ENCODE measurements at regions of chr3 and their contacts with region 1.

Region 1: GRCh38 chr3:174862143-174862542 is 3.0 kb downstream of the NAALADL2 start:
- DNase-seq: peak; percentile 68 to 82
- H3K4me3 ChIP-seq: no peak overlapping the region
- H3K27ac ChIP-seq: no peak overlapping the region
- H3K4me1 ChIP-seq: peaks cover 60% of the 10 kb centered on the region
- H3K27me3 ChIP-seq: no peaks in the 10 kb centered on the region
- CTCF ChIP-seq: peak; percentile 61

Region 2: DNA sequence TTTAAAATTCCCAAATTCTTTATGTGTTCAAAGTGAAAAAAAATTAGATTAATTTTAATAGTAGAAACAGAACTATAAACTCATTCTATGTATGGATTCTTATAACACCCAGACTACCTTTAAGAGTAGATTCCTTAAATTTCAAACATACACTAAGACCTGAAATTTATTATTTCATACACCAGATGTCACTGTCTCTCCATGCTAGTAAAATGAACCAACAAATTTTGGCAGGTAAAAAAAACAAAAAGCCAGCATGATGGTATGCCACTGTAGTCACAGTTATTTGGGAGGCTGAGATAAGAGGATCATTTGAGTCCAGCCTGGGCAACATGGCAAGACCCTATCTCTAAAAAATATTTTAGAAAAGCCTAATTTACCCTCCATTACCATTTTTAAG is 464.3 kb before region 1 on chr3:
- CTCF ChIA-PET with region 1: no interaction called
- POLR2A ChIA-PET with region 1: no interaction called
- intact Hi-C with region 1: loop called (anchors 2 kb)
- DNase-seq: peak in 1 of 2 experiments; percentile 51
- H3K4me3 ChIP-seq: no peak overlapping the region
- H3K27ac ChIP-seq: no peak overlapping the region
- H3K4me1 ChIP-seq: no peaks in the 10 kb centered on the region
- H3K27me3 ChIP-seq: no peaks in the 10 kb centered on the region
- CTCF ChIP-seq: peak; percentile 79

Region 3: DNA sequence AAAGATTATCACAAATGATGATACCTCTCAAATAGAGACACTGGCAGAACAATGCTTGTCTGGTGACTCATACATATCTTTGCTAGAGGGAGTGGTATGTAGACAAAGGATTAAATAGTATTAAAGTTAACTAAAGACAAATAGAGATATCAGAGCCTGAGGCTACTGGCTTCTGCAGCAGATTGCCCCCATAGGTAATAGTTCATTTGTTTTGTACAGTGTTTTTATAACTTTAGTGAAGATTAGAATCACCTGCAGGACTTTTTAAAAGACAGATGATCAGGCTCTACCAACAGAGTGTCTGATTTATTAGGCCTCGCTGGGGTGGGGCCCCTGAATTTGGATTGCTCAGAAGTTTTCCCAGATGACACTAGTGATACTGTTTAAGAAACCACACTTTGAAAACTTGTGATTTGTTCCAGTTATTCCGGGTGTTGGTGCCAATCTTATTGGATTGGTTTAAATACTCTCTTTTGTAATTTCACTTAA is 93.4 kb after region 1 on chr3:
- CTCF ChIA-PET with region 1: no interaction called
- POLR2A ChIA-PET with region 1: no interaction called
- intact Hi-C with region 1: loop called (anchors 1 kb)
- DNase-seq: peak; percentile 58 to 90
- H3K4me3 ChIP-seq: no peak overlapping the region
- H3K27ac ChIP-seq: 0 out of 2 replicates have a peak overlapping the region, but pooled peaks have one; percentile 3
- H3K4me1 ChIP-seq: peaks cover 25% of the 10 kb centered on the region
- H3K27me3 ChIP-seq: no peaks in the 10 kb centered on the region
- CTCF ChIP-seq: no peak

Region 4: DNA sequence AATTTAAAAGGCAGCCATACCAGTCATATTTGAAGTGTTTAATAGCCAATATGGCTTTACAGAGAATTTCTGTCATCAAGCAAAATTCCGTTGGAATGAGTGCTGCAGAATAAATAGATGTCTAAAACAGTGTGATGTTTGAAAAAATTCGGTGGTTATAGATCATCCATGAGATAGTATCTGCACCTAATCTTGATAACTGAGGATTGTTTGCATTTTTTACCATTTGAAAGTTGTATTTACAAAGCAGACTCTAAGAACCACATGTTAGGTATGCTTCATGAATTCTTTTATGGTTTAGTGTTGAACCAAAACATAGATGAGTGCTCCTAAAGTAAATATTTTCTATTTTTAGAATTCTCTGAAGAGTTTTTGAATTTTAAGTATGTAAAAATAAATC is 473.1 kb after region 1 on chr3:
- CTCF ChIA-PET with region 1: no interaction called
- POLR2A ChIA-PET with region 1: no interaction called
- intact Hi-C with region 1: loop called (anchors 2 kb)
- DNase-seq: peak in 1 of 2 experiments; percentile 54
- H3K4me3 ChIP-seq: no peak overlapping the region
- H3K27ac ChIP-seq: no peak overlapping the region
- H3K4me1 ChIP-seq: peaks cover 15% of the 10 kb centered on the region
- H3K27me3 ChIP-seq: no peaks in the 10 kb centered on the region
- CTCF ChIP-seq: no peak

Region 5: GRCh38 chr3:175941356-175941755 is 1079.2 kb after region 1 on chr3:
- CTCF ChIA-PET with region 1: no interaction called
- POLR2A ChIA-PET with region 1: no interaction called
- intact Hi-C with region 1: loop called (anchors 2 kb)
- DNase-seq: peak in 1 of 2 experiments; percentile 30
- H3K4me3 ChIP-seq: no peak overlapping the region
- H3K27ac ChIP-seq: no peak overlapping the region
- H3K4me1 ChIP-seq: no peaks in the 10 kb centered on the region
- H3K27me3 ChIP-seq: no peaks in the 10 kb centered on the region
- CTCF ChIP-seq: peak; percentile 71

Region 6: DNA sequence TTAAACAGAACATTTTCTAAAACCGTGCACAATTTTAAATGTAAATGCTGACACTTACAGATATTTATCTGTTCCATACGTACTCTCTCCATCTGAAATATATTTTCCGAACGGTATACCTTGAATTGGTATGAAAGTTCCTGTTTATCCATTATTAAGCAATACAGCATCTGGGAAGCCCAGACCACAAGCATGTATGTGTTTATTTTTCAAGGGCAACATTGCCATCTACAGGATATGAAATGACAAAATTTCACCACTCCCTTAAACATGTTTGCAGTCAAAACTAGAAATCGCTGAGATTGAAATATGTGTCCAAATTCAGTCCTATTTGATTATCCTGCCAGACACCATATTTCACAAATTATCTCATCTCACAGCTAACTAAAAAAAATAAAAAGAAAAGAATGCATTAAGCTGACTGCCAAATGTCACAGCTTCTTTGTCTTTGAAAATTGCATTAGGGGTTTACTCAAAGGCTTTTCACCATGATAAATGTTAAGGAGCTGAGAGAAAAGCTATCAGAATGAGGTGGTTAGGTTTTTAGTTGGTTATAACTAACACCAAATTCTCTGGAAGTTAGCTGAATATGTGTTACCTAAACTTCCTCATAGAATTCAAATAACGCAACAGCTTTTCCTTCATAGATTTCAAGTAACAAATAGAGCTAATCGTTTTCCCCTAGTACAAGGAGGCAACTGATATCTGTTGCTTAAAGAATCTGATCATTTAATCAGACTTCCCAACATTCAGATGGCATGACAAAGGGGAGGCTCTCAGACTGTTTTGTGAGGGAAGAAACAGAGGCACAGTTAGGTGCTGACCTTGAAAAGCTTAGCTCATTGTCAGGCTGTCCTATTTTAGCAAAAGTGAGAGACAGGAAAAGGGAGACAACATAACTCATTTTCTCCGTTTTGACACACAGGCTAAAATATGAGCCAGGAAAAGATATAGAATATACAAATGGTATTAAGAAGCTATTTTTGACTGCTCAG is 1802.0 kb after region 1 on chr3:
- CTCF ChIA-PET with region 1: no interaction called
- POLR2A ChIA-PET with region 1: no interaction called
- intact Hi-C with region 1: loop called (anchors 10 kb)
- DNase-seq: peak; percentile 10 to 65
- H3K4me3 ChIP-seq: no peak overlapping the region
- H3K27ac ChIP-seq: no peak overlapping the region
- H3K4me1 ChIP-seq: 0 out of 2 replicates have a peak, but pooled peaks cover 4% of the 10 kb centered on the region
- H3K27me3 ChIP-seq: no peaks in the 10 kb centered on the region
- CTCF ChIP-seq: peak; percentile 69

Measured in PC-9 (cell line).